ENCODE measurements at regions of chrX and their contacts with region 1.

Region 1: DNA sequence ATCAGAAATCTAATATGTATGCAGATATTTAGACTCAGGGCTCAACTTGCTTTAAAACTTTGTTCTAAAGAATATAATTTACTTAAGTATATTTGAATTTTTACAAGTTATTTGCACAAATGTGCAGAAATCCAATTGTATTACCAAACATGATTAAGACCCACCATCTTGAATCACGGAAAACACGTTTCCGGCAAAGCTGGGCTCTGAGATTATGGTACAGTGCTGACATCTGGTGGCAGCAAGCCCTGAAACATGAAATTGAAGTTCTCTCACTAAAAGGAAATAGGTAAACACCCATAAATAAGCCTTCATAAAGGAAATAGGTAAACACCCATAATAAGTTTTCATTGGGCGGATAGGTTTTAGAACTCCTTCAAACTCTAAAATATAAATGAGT is 98.3 kb upstream of the MAOA start:
- DNase-seq: peak in 2 of 3 donors; percentile 41 to 69
- ATAC-seq: no peak
- H3K4me3 ChIP-seq: no peak overlapping the region
- H3K27ac ChIP-seq: no peak overlapping the region
- H3K4me1 ChIP-seq: no peaks in the 10 kb centered on the region
- H3K27me3 ChIP-seq: no peaks in the 10 kb centered on the region

Region 2: GRCh38 chrX:41781502-41781901 is 1776.3 kb before region 1 on chrX:
- intact Hi-C with region 1: loop called in 1 of 4 experiments (anchors 5 kb)
- DNase-seq: no peak
- ATAC-seq: no peak
- H3K4me3 ChIP-seq: no peak overlapping the region
- H3K27ac ChIP-seq: no peak overlapping the region
- H3K4me1 ChIP-seq: no peaks in the 10 kb centered on the region
- H3K27me3 ChIP-seq: no peaks in the 10 kb centered on the region

Region 3: GRCh38 chrX:41802958-41803357 is 1754.8 kb before region 1 on chrX:
- intact Hi-C with region 1: loop called in 1 of 4 experiments (anchors 10 kb)
- DNase-seq: no peak
- ATAC-seq: no peak
- H3K4me3 ChIP-seq: no peak overlapping the region
- H3K27ac ChIP-seq: no peak overlapping the region
- H3K4me1 ChIP-seq: peaks cover 1% of the 10 kb centered on the region
- H3K27me3 ChIP-seq: no peaks in the 10 kb centered on the region

Region 4: DNA sequence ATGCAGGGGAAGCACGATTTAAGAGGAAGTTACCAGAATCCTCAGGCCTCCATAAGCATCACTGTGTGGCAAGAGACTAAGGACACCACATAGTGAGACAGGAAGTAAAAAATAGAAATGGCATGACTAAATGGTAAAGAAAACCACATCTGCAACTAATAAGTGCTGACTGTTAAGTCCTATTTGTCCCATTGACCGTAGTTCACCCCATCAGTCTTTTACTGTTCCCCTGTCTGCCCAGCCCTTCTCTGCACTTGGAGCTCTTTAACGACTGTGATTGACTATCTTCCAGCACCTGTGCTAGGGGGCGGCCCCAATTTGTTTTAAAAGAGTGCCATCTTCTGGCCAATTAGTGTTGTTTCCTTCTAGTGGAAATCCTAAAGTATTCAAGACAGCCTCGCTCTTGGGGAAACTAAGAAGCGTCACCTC is 192.5 kb after region 1 on chrX:
- intact Hi-C with region 1: loop called (anchors 2 to 10 kb)
- DNase-seq: peak; percentile 27 to 58 (median 36)
- ATAC-seq: peak; percentile 83 to 91
- H3K4me3 ChIP-seq: no peak overlapping the region
- H3K27ac ChIP-seq: no peak overlapping the region
- H3K4me1 ChIP-seq: no peaks in the 10 kb centered on the region
- H3K27me3 ChIP-seq: no peaks in the 10 kb centered on the region

Measured in right cardiac atrium (tissue), 5 donors.